ENCODE measurements at regions of chr7 and their contacts with region 1.

Region 1: DNA sequence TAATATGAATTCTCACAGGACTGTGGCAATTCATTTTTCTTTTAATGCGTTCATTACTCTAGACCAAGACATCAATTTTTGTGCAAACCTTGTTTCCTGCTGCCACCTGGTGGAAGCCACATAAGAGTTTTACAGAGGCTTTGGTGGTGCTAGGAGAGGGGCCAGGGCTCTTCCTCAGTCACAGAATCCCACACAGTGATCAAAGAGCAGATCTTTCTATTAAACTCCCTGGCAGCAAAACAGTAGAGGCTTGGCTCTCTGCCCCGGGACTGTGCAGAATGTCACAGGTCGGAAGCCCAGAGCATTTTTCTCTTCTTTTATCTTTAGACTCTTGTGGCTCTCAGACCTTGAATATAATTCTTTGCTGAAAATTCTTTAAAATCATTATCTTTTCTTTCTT is 506.4 kb upstream of the C7orf33 start:
- DNase-seq: peak; percentile 38
- H3K4me3 ChIP-seq: no peak overlapping the region
- H3K27ac ChIP-seq: no peak overlapping the region
- H3K4me1 ChIP-seq: no peaks in the 10 kb centered on the region
- H3K27me3 ChIP-seq: no peaks in the 10 kb centered on the region
- CTCF ChIP-seq: peak; percentile 34

Region 2: DNA sequence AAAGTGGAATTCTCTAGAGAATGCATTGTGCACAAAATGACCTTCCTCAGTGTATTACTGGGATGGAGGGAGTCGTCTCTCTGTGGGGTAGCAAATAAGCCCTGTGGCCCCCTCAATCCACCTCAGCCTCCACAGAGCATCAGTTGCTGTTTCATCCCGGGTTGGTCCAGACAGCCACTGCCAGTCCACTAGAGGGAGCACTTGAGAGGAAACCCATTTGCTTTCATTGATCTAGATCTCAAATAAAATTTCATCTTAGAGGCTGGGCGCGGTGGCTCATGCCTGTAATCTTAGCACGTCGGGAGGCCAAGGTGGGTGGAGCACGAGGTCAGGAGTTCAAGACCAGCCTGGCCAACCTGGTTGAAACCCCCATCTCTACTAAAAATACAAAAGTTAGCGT is 838.8 kb before region 1 on chr7:
- intact Hi-C with region 1: loop called (anchors 5 kb)
- DNase-seq: peak; percentile 26
- H3K4me3 ChIP-seq: no peak overlapping the region
- H3K27ac ChIP-seq: no peak overlapping the region
- H3K4me1 ChIP-seq: no peaks in the 10 kb centered on the region
- H3K27me3 ChIP-seq: no peaks in the 10 kb centered on the region
- CTCF ChIP-seq: peak; percentile 35

Region 3: DNA sequence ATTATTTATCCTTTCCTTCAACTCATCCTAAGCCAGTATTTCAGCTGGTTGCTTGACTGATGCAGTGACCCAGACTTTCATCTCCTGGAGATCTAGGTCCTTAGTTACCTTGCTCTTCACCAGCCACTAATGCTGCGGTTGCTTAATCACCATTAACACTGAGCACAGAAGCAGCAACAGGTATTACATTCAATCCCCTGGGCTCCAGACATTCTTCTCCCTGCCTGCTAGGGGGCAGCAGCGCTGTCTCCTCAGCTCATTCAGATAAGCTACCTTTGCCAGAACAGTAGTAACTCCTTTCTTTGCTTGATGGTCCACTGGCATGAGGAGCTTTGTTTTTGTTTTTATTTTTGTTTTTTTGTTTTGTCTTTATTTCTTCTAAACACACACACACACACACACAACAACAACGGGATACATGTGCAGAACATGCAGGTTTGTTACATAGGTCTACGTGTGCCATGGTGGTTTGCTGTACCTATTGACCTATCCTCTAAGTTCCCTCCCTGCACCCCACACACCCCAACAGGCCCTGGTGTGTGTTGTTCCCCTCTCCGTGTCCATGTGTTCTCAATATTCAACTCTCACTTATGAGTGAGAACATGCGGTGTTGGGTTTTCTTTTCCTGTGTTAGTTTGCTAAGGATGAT is 536.8 kb before region 1 on chr7:
- intact Hi-C with region 1: loop called (anchors 5 kb)
- DNase-seq: peak; percentile 22
- H3K4me3 ChIP-seq: no peak overlapping the region
- H3K27ac ChIP-seq: no peak overlapping the region
- H3K4me1 ChIP-seq: no peaks in the 10 kb centered on the region
- H3K27me3 ChIP-seq: no peaks in the 10 kb centered on the region
- CTCF ChIP-seq: peak; percentile 43